Panc1 (cell line): ENCODE measurements at regions of chr11 and their contacts with region 1.

Region 1: GRCh38 chr11:6377902-6378639 is 12.2 kb upstream of the SMPD1 start:
- DNase-seq: no peak
- ATAC-seq: no peak
- H3K4me3 ChIP-seq: no peak overlapping the region
- H3K27ac ChIP-seq: no peak overlapping the region
- H3K4me1 ChIP-seq: no peaks in the 10 kb centered on the region
- H3K27me3 ChIP-seq: peaks cover 8% of the 10 kb centered on the region
- CTCF ChIP-seq: no peak

Region 2: DNA sequence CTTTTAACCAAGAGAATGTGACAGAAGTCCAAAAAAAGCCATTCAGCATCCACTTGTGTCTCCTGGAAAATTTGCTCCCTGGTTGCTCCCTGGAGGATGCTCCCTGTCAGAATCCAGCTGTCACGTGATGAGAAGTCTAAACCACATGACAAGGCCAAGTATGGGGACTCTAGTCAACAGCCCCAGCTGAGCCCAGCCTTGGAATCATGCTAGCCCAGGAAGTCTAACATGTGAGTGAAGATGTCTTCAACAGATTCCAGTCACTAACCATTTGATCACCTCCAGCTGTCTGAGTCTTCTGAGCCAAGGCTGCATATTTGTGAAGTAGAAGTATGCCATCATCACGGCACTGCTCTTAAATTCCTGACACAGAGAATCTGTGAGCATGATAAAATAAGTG is 266.4 kb before region 1 on chr11:
- CTCF ChIA-PET with region 1: no interaction called
- POLR2A ChIA-PET with region 1: interaction called, 10 read pairs
- in situ Hi-C with region 1: no loop called
- intact Hi-C with region 1: no loop called
- DNase-seq: no peak
- ATAC-seq: no peak
- H3K4me3 ChIP-seq: no peak overlapping the region
- H3K27ac ChIP-seq: no peak overlapping the region
- H3K4me1 ChIP-seq: no peaks in the 10 kb centered on the region
- H3K27me3 ChIP-seq: no peaks in the 10 kb centered on the region
- CTCF ChIP-seq: no peak

Region 3: GRCh38 chr11:6334806-6335205 is 43.3 kb before region 1 on chr11:
- CTCF ChIA-PET with region 1: no interaction called
- POLR2A ChIA-PET with region 1: no interaction called
- in situ Hi-C with region 1: no loop called
- intact Hi-C with region 1: no loop called
- DNase-seq: no peak
- ATAC-seq: no peak; the same call in 1 of the 2 replicates
- H3K4me3 ChIP-seq: no peak overlapping the region
- H3K27ac ChIP-seq: no peak overlapping the region
- H3K4me1 ChIP-seq: no peaks in the 10 kb centered on the region
- H3K27me3 ChIP-seq: no peaks in the 10 kb centered on the region
- CTCF ChIP-seq: no peak

Region 4: DNA sequence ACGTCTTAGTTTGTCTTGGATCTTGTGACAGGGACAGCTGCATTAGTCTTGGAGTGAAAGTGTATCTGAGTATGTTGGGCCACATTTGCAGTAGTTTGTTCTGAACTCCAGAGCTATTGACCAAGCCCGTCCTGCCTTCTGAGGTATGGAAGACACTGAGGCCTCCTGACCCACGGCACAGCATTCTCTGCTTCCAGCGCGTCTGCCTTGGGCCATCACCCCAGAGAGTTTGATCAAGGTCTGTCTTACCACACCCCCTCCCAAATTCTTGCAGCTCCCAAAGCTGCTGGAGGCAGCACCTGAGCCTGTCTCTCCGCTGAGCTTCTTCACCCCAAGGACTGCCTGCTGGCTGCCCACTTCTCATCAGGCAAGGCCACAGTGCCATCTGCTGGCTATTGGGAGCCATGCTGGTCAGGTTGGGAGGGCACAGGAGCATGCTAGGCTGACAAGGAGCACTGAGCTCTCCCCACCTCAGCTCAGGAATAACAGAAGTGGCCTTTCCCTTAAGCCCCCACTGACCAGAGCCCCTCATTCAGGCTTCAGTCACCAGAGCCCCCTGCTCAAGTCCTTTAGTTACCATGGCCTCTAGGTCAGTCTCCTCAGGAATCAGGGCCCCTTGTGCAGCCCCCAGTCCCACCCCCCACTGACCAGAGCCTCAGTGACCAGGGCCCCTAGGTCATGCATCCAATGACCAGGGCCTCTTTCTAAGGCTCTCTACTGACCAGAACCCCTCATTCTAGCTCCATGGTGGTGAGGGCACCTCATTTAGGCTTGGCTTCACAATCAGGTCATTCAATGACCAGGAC is 15.0 kb before region 1 on chr11:
- CTCF ChIA-PET with region 1: interaction called, 22 read pairs
- POLR2A ChIA-PET with region 1: no interaction called
- in situ Hi-C with region 1: no loop called
- intact Hi-C with region 1: no loop called
- DNase-seq: peak; percentile 66
- ATAC-seq: peak; percentile 98
- H3K4me3 ChIP-seq: no peak overlapping the region
- H3K27ac ChIP-seq: no peak overlapping the region
- H3K4me1 ChIP-seq: no peaks in the 10 kb centered on the region
- H3K27me3 ChIP-seq: peaks cover 2% of the 10 kb centered on the region
- CTCF ChIP-seq: peak; percentile 99

Region 5: GRCh38 chr11:6431861-6432260 is 53.8 kb after region 1 on chr11:
- CTCF ChIA-PET with region 1: interaction called, 11 read pairs
- POLR2A ChIA-PET with region 1: no interaction called
- in situ Hi-C with region 1: no loop called
- intact Hi-C with region 1: no loop called
- DNase-seq: no peak
- ATAC-seq: peak; percentile 73; the same call in 1 of the 2 replicates
- H3K4me3 ChIP-seq: no peak overlapping the region
- H3K27ac ChIP-seq: no peak overlapping the region
- H3K4me1 ChIP-seq: no peaks in the 10 kb centered on the region
- H3K27me3 ChIP-seq: peaks cover 4% of the 10 kb centered on the region; the same call in 1 of the 2 replicates
- CTCF ChIP-seq: no peak

Region 6: GRCh38 chr11:6473481-6474422 is 95.7 kb after region 1 on chr11 and contains the start of gene TRIM3:
- CTCF ChIA-PET with region 1: interaction called, 10 read pairs
- POLR2A ChIA-PET with region 1: interaction called, 4 read pairs
- in situ Hi-C with region 1: no loop called
- intact Hi-C with region 1: no loop called
- DNase-seq: peak; percentile 64
- ATAC-seq: peak; percentile 92
- H3K4me3 ChIP-seq: peak within 1 kb of the TSS; percentile 77 to 93
- H3K27ac ChIP-seq: peak within 1 kb of the TSS; percentile 91
- H3K4me1 ChIP-seq: peaks cover 23% of the 10 kb centered on the region
- H3K27me3 ChIP-seq: no peaks in the 10 kb centered on the region
- CTCF ChIP-seq: peak; percentile 80
- total RNA-seq, gene TRIM3: 35.4 TPM

Region 7: GRCh38 chr11:6531267-6531752 is 153.2 kb after region 1 on chr11:
- CTCF ChIA-PET with region 1: interaction called, 10 read pairs
- POLR2A ChIA-PET with region 1: no interaction called
- in situ Hi-C with region 1: no loop called
- intact Hi-C with region 1: no loop called
- DNase-seq: peak; percentile 80
- ATAC-seq: peak; percentile 84
- H3K4me3 ChIP-seq: no peak overlapping the region
- H3K27ac ChIP-seq: no peak overlapping the region
- H3K4me1 ChIP-seq: no peaks in the 10 kb centered on the region
- H3K27me3 ChIP-seq: no peaks in the 10 kb centered on the region
- CTCF ChIP-seq: peak; percentile 94

Region 8: GRCh38 chr11:6682936-6683861 is 305.1 kb after region 1 on chr11 and contains the start of gene MRPL17:
- CTCF ChIA-PET with region 1: interaction called, 14 read pairs
- POLR2A ChIA-PET with region 1: no interaction called
- in situ Hi-C with region 1: no loop called
- intact Hi-C with region 1: no loop called
- DNase-seq: peak; percentile 99
- ATAC-seq: peak; percentile 98
- H3K4me3 ChIP-seq: peak within 1 kb of the TSS; percentile 82 to 99
- H3K27ac ChIP-seq: peak within 1 kb of the TSS; percentile 99
- H3K4me1 ChIP-seq: peaks cover 16% of the 10 kb centered on the region
- H3K27me3 ChIP-seq: peaks cover 3% of the 10 kb centered on the region; the same call in 1 of the 2 replicates
- CTCF ChIP-seq: peak; percentile 100
- total RNA-seq, gene MRPL17: 115 TPM